CD8-positive, alpha-beta T cell (primary cell): ENCODE measurements at regions of chr7 and their contacts with region 1.

Region 1: GRCh38 chr7:130069978-130070860 is at the start of gene KLHDC10:
- DNase-seq: peak; percentile 89 to 99 (median 96)
- ATAC-seq: peak; percentile 93
- H3K4me3 ChIP-seq: peak within 1 kb of the TSS; percentile 67 to 72
- H3K4me3 Mint-ChIP-seq: peak within 1 kb of the TSS; percentile 87
- H3K27ac ChIP-seq: peak within 1 kb of the TSS; percentile 76 to 85
- H3K27ac Mint-ChIP-seq: peak within 1 kb of the TSS; percentile 92
- H3K4me1 ChIP-seq: peaks cover 22% of the 10 kb centered on the region
- H3K4me1 Mint-ChIP-seq: peaks cover 45% of the 10 kb centered on the region
- H3K27me3 ChIP-seq: peaks cover 0 to 2% of the 10 kb centered on the region in 2 experiments
- H3K27me3 Mint-ChIP-seq: no peaks in the 10 kb centered on the region
- CTCF ChIP-seq: no peak
- total RNA-seq, gene KLHDC10: 9.6 to 9.9 TPM

Region 2: DNA sequence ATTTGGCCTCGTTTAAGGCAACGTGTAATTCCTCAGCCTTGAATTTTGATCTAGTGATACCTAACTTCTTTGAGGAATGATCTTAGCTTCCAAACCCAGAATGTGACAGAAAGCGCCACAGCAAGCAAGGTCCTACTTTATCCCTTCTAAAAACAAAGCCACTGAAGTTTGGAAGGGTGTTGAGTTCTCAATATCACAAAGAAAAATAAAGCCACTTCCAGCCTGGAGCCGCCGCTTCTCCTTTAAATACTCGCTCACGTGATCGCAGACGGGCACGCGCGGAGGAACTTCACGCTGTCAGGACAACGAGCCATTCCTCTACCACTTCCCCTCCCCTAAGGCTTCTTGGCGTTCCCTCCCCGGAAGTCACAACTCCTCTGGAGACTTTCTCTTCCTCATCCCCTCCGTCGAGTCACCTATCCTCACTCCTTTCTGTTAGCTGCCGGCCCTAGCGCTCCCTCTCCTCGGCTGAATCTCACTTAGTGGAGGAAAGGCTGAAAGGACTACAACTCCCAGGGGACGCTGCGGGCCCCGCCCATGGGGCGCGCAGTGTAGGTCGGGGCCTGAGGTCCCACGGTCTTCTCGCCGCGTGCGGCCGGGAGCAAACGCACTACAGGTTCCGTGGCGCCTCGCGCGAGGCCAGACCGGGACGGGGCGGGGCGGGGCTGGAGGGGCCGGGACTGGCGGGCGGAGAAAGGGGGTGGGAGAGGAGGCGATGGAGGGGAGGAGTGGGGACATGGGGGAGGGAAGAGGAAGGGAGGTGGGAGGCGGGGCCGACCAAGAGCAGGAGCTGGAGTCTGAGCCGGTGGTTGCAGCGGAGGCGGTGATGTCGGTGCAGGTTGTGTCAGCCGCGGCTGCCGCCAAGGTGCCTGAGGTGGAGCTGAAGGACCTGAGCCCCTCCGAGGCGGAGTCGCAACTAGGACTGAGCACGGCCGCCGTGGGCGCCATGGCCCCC is 845.7 kb before region 1 on chr7 and contains the start of gene AHCYL2:
- CTCF ChIA-PET with region 1: no interaction called
- POLR2A ChIA-PET with region 1: no interaction called
- intact Hi-C with region 1: loop called in 1 of 2 experiments (anchors 5 kb)
- DNase-seq: peak; percentile 96 to 99 (median 97)
- ATAC-seq: peak; percentile 87
- H3K4me3 ChIP-seq: peak within 1 kb of the TSS; percentile 71 to 96
- H3K4me3 Mint-ChIP-seq: peak within 1 kb of the TSS; percentile 95
- H3K27ac ChIP-seq: peak within 1 kb of the TSS; percentile 76 to 91
- H3K27ac Mint-ChIP-seq: peak within 1 kb of the TSS; percentile 93
- H3K4me1 ChIP-seq: peaks cover 26% of the 10 kb centered on the region
- H3K4me1 Mint-ChIP-seq: peaks cover 44% of the 10 kb centered on the region
- H3K27me3 ChIP-seq: no peaks in the 10 kb centered on the region
- H3K27me3 Mint-ChIP-seq: no peaks in the 10 kb centered on the region
- CTCF ChIP-seq: no peak
- total RNA-seq, gene AHCYL2: 3.1 to 5.8 TPM

Region 3: GRCh38 chr7:130084037-130084875 is 14.0 kb after region 1 on chr7:
- CTCF ChIA-PET with region 1: interaction called, 41 read pairs
- POLR2A ChIA-PET with region 1: no interaction called
- intact Hi-C with region 1: no loop called
- DNase-seq: peak in 2 of 9 experiments; percentile 12 to 27
- ATAC-seq: peak; percentile 34
- H3K4me3 ChIP-seq: no peak overlapping the region
- H3K4me3 Mint-ChIP-seq: no peak overlapping the region
- H3K27ac ChIP-seq: no peak overlapping the region
- H3K27ac Mint-ChIP-seq: no peak overlapping the region
- H3K4me1 ChIP-seq: peaks cover 4% of the 10 kb centered on the region
- H3K4me1 Mint-ChIP-seq: peaks cover 29% of the 10 kb centered on the region
- H3K27me3 ChIP-seq: no peaks in the 10 kb centered on the region
- H3K27me3 Mint-ChIP-seq: no peaks in the 10 kb centered on the region
- CTCF ChIP-seq: no peak

Region 4: DNA sequence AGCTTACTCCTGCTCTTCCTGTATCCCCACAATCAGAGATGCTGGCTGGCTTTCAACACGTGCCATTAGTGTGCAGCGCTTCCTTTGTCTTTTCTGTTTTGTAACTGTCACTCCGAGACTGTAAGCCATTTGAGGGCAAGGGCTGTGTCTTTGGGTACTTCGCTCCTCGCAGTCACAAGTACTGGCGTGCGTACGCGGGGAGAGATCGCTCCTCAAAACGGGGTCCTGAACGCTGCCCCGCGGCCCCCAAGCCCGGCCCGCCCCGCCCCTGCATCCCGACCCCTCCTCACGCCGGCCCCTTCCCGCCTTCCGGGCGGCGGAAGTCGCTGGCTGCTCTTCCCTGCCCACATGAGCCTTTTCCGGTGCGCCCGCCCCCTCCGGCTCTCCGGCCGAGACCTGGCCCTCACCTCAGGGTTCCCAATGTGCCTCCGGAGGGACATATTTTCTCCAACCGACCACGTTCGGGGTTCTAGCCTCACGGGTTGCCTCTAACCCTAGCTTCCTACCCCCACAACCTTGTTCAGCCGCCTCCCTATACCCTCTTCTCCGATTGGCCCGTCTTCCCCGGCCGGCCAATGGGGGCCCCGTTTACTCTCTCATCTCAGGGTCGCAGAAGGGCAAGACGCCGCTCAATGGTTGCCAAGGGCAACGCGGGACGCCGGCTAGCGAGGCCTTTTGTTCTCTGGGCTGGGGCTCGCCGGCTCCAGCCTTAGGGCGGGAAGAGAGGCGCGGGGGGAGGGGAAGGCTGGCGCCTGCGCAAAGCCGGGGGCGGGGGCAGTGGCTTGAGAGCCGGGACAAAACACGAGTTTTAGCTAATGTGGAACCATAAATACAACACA is 370.5 kb after region 1 on chr7 and contains the start of gene CEP41:
- CTCF ChIA-PET with region 1: no interaction called
- POLR2A ChIA-PET with region 1: no interaction called
- intact Hi-C with region 1: loop called (anchors 5 kb)
- DNase-seq: peak; percentile 82 to 94 (median 89)
- ATAC-seq: peak; percentile 96
- H3K4me3 ChIP-seq: peak within 1 kb of the TSS; percentile 81 to 99
- H3K4me3 Mint-ChIP-seq: peak within 1 kb of the TSS; percentile 99
- H3K27ac ChIP-seq: peak within 1 kb of the TSS; percentile 57 to 75
- H3K27ac Mint-ChIP-seq: peak within 1 kb of the TSS; percentile 97
- H3K4me1 ChIP-seq: peaks cover 31% of the 10 kb centered on the region
- H3K4me1 Mint-ChIP-seq: peaks cover 51% of the 10 kb centered on the region
- H3K27me3 ChIP-seq: no peaks in the 10 kb centered on the region
- H3K27me3 Mint-ChIP-seq: no peaks in the 10 kb centered on the region
- CTCF ChIP-seq: no peak
- total RNA-seq, gene CEP41: 4.8 to 5.5 TPM

Region 5: DNA sequence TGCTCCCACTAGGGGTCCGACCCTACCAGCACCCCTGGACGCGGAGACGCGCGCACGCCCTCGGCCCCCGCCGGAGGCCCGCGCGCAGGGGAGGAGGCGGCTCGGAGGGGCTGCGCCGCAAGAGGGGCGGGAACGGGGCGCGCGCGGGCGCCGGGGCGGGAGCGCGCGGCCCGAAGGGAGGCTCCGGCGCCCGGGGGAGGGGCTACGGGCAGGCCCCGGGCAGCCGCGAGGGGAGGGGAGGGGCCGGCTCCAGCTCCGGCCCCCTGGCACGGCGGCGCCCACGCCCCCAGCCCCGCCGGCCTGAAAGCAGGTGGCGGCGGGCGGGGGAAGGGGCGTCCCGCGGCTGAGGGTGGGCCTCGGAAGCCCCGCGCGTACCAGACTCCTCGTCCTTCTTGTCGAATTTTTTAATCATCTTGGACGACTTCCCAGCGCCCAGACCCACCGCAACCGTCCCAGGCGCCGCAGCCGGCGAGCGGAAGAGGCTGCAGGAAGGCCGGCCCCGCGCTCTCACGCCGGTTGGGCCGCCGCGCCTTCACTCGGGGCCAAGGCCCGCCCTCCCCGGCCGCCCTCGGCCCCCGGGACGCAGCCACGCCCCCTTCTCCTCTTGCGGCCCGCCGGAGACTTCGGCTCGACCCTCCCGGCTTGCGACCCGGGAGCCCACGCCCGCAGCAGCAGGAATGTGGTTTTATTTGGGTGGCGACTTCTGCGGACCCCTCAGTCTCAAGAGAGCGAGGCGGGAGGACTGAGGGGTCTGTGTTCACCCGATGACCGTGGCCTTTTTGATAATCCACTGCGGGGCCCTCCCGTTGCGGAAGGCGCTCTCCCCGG is 598.3 kb after region 1 on chr7 and contains the start of gene COPG2:
- CTCF ChIA-PET with region 1: no interaction called
- POLR2A ChIA-PET with region 1: no interaction called
- intact Hi-C with region 1: loop called (anchors 1 to 5 kb)
- DNase-seq: peak; percentile 34 to 87 (median 72)
- ATAC-seq: peak; percentile 81
- H3K4me3 ChIP-seq: peak within 1 kb of the TSS; percentile 73 to 77
- H3K4me3 Mint-ChIP-seq: peak within 1 kb of the TSS; percentile 93
- H3K27ac ChIP-seq: peak within 1 kb of the TSS; percentile 43 to 61
- H3K27ac Mint-ChIP-seq: peak within 1 kb of the TSS; percentile 76
- H3K4me1 ChIP-seq: no peaks in the 10 kb centered on the region
- H3K4me1 Mint-ChIP-seq: peaks cover 20% of the 10 kb centered on the region
- H3K27me3 ChIP-seq: no peaks in the 10 kb centered on the region
- H3K27me3 Mint-ChIP-seq: peaks cover 3% of the 10 kb centered on the region
- CTCF ChIP-seq: no peak
- total RNA-seq, gene COPG2: 2.7 to 3.0 TPM

Region 6: DNA sequence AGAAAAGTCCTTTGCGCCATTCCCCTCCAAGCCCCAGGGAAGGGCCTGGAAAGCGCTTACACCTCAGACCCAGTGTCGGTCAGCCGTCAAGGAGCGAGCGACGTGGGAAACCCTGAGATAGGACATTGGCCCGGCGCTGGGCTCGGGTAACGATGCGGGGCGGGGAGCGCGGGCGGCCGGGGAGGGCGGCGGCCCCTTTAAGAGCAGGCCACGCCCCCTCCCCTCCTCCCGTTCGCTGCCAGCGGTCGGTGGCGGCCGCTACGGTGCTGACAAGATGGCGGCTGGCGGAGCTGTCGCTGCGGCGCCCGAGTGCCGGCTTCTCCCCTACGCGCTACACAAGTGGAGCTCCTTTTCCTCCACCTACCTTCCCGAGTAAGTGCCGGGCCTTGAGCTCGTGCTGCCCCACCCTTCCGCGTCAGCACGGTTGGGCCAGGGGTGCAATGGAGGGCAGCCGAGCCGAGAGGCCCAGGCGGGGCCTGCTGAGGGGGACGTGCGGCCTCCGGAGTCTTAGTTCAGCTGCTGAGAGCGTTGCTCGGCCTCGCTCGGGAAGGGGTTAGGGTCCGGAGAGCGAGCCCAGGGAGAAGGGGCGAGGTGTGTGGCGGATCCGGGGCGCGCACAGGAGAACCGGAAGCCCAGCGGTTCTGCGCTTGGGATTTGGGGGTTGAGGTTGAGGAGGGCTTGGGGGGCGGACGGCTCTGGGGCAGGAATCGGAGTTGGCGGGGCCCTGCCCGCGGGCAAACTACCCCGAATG is 1257.6 kb after region 1 on chr7 and contains the start of gene MKLN1:
- CTCF ChIA-PET with region 1: no interaction called
- POLR2A ChIA-PET with region 1: no interaction called
- intact Hi-C with region 1: loop called in 1 of 2 experiments (anchors 5 kb)
- DNase-seq: peak; percentile 75 to 94 (median 89)
- ATAC-seq: peak; percentile 94
- H3K4me3 ChIP-seq: peak within 1 kb of the TSS; percentile 95 to 100
- H3K4me3 Mint-ChIP-seq: peak within 1 kb of the TSS; percentile 92
- H3K27ac ChIP-seq: peak within 1 kb of the TSS; percentile 85 to 95
- H3K27ac Mint-ChIP-seq: peak within 1 kb of the TSS; percentile 97
- H3K4me1 ChIP-seq: peaks cover 33% of the 10 kb centered on the region
- H3K4me1 Mint-ChIP-seq: peaks cover 68% of the 10 kb centered on the region
- H3K27me3 ChIP-seq: no peaks in the 10 kb centered on the region
- H3K27me3 Mint-ChIP-seq: no peaks in the 10 kb centered on the region
- CTCF ChIP-seq: no peak
- total RNA-seq, gene MKLN1: 43.2 to 54.5 TPM